ENCODE measurements at regions of chr4 and their contacts with region 1.

Region 1: DNA sequence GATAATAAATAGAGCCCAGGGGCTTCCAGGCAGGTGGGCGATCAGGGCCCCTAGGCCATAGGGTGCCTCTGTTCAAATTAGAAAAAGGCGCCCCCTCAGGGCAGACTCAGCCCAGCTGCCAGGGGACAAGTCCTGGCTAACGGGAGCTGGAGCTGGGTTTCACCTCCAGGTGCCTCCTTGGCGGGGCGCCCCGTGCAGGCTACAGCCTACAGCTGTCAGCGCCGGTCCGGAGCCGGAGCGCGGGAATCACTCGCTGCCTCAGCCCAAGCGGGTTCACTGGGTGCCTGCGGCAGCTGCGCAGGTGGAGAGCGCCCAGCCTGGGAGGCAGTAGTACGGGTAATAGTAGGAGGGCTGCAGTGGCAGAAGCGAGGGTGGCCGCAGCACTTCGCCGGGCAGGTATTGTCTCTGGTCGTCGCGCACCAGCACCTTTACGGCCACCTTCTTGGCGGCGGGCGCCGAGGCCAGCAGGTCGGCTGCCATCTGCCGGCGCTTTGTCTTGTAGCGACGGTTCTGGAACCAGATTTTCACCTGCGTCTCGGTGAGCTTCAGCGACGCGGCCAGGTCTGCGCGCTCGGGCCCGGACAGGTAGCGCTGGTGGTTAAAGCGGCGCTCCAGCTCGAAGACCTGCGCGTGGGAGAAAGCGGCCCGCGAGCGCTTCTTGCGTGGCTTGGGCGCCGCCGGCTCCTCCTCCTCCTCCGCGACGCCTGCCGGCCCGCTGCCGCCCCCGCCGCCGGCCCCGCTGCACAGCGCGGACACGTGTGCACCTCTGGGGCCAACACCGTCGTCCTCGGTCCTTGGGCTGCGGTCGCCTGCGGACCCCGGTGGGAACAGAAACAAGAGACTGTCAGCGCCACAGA is 2.4 kb downstream of the NKX3-2 start:
- DNase-seq: peak; percentile 48
- H3K4me3 Mint-ChIP-seq: peak overlapping the region; percentile 42
- H3K27ac Mint-ChIP-seq: no peak overlapping the region
- H3K4me1 Mint-ChIP-seq: peaks cover 60% of the 10 kb centered on the region
- H3K27me3 Mint-ChIP-seq: peaks cover 81% of the 10 kb centered on the region

Region 2: GRCh38 chr4:13137390-13137789 is 404.6 kb before region 1 on chr4:
- CTCF ChIA-PET with region 1: no interaction called
- intact Hi-C with region 1: no loop called
- DNase-seq: no peak
- H3K4me3 Mint-ChIP-seq: no peak overlapping the region
- H3K27ac Mint-ChIP-seq: no peak overlapping the region
- H3K4me1 Mint-ChIP-seq: no peaks in the 10 kb centered on the region
- H3K27me3 Mint-ChIP-seq: no peaks in the 10 kb centered on the region

Region 3: DNA sequence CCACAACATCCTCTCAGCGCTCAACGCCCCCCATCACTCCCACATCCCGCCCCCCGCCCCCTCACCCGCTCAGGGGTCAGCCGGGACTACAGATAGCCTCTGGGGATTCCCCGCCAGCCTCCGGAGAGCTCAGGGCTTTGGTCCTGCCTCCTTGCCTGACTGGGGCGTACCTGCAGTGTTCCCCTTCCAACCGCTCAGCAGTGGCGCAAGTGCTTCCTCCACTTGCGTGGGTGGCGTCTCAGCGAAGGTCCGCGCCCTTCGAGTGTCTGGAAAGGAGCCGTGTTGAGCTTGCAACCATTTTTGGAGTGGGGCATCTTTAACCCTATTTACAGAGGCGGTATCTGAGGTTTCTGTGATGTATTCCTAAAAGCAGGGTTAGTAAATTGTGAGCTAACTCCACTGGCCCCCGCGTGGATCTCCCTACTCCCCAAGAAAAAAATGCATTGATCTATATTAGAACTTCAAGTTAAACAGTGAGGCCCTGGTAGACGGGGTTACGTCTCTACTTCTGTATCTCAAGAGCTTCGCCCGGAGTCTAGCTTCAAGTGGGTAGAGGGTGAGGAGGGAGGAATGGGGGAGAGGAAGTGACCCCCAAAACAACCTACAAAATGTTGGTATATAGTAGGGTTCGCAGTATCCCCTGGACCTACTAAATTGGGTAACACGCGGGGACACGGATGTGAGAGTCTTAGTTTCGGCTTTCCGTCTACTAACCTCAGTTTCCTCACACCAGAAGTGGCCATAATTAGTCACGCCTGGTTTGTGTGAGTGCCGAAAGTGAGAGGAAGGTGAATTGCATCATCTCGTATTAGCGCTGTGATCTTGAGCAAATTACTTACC is 13.7 kb before region 1 on chr4:
- CTCF ChIA-PET with region 1: interaction called, 13 read pairs
- intact Hi-C with region 1: loop called (anchors 1 kb)
- DNase-seq: peak; percentile 57
- H3K4me3 Mint-ChIP-seq: peak overlapping the region; percentile 43
- H3K27ac Mint-ChIP-seq: no peak overlapping the region
- H3K4me1 Mint-ChIP-seq: peaks cover 35% of the 10 kb centered on the region
- H3K27me3 Mint-ChIP-seq: peaks cover 85% of the 10 kb centered on the region

Measured in activated naive CD4-positive, alpha-beta T cell treated with anti-CD3 and anti-CD28 coated beads for 36 hours (primary cell).